CD8-positive, alpha-beta T cell (primary cell): ENCODE measurements at regions of chr6 and their contacts with region 1.

Region 1: DNA sequence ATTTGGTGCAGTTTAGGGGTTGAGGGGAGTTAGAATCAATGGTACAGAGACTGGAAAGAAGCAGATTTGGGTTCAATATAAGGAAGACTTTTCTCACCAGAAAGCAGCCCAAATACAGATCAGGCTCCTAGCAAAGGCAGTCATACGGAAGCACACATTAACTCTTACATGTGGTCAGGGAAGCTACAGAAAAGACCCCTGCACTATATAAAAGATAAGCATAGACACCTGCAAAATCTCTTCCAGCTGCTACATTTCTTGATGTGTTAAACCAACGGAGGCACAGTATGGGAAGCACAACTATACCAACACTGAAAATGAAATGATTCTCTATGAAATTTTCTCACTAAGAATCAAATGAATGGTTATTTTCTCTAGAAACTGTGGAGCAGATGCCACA is 150.8 kb downstream of the GMDS start:
- DNase-seq: no peak
- ATAC-seq: no peak
- H3K4me3 ChIP-seq: no peak overlapping the region
- H3K4me3 Mint-ChIP-seq: no peak overlapping the region
- H3K27ac ChIP-seq: no peak overlapping the region
- H3K27ac Mint-ChIP-seq: no peak overlapping the region
- H3K4me1 ChIP-seq: no peaks in the 10 kb centered on the region
- H3K4me1 Mint-ChIP-seq: no peaks in the 10 kb centered on the region
- H3K27me3 ChIP-seq: no peaks in the 10 kb centered on the region
- H3K27me3 Mint-ChIP-seq: no peaks in the 10 kb centered on the region
- CTCF ChIP-seq: no peak

Region 2: GRCh38 chr6:2028457-2029038 is 66.1 kb before region 1 on chr6:
- CTCF ChIA-PET with region 1: no interaction called
- POLR2A ChIA-PET with region 1: no interaction called
- intact Hi-C with region 1: no loop called
- DNase-seq: no peak
- ATAC-seq: no peak
- H3K4me3 ChIP-seq: no peak overlapping the region
- H3K4me3 Mint-ChIP-seq: no peak overlapping the region
- H3K27ac ChIP-seq: no peak overlapping the region
- H3K27ac Mint-ChIP-seq: no peak overlapping the region
- H3K4me1 ChIP-seq: peaks cover 15% of the 10 kb centered on the region
- H3K4me1 Mint-ChIP-seq: peaks cover 25% of the 10 kb centered on the region
- H3K27me3 ChIP-seq: no peaks in the 10 kb centered on the region
- H3K27me3 Mint-ChIP-seq: no peaks in the 10 kb centered on the region
- CTCF ChIP-seq: no peak

Region 3: GRCh38 chr6:2599817-2600216 is 505.2 kb after region 1 on chr6:
- CTCF ChIA-PET with region 1: no interaction called
- POLR2A ChIA-PET with region 1: no interaction called
- intact Hi-C with region 1: loop called in 1 of 2 experiments (anchors 5 kb)
- DNase-seq: no peak
- ATAC-seq: no peak
- H3K4me3 ChIP-seq: no peak overlapping the region
- H3K4me3 Mint-ChIP-seq: no peak overlapping the region
- H3K27ac ChIP-seq: no peak overlapping the region
- H3K27ac Mint-ChIP-seq: no peak overlapping the region
- H3K4me1 ChIP-seq: no peaks in the 10 kb centered on the region
- H3K4me1 Mint-ChIP-seq: no peaks in the 10 kb centered on the region
- H3K27me3 ChIP-seq: no peaks in the 10 kb centered on the region
- H3K27me3 Mint-ChIP-seq: peaks cover 11% of the 10 kb centered on the region
- CTCF ChIP-seq: no peak